ENCODE measurements at regions of chr1 and their contacts with region 1.

Region 1: DNA sequence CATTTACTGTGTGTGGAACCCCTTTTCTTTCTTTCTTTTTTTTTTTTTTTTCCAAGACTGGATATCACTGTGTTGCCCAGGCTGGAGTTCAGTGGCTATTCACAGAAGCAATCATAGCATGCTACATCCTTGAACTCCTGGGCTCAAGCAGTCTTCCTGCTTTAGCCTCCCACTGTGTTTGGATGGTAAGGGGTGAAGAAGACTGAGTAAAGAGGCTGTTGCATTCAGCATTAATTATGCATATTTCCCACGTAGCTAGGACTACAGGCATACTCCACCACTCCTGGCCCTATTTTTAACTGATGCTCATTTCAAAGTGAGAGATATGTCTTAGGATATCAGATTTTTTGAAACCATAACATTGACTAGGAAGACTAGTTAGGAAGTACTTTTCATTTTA is 39.5 kb downstream of the PHACTR4 start:
- DNase-seq: no peak
- H3K4me3 ChIP-seq: no peak overlapping the region
- CTCF ChIP-seq: no peak

Region 2: DNA sequence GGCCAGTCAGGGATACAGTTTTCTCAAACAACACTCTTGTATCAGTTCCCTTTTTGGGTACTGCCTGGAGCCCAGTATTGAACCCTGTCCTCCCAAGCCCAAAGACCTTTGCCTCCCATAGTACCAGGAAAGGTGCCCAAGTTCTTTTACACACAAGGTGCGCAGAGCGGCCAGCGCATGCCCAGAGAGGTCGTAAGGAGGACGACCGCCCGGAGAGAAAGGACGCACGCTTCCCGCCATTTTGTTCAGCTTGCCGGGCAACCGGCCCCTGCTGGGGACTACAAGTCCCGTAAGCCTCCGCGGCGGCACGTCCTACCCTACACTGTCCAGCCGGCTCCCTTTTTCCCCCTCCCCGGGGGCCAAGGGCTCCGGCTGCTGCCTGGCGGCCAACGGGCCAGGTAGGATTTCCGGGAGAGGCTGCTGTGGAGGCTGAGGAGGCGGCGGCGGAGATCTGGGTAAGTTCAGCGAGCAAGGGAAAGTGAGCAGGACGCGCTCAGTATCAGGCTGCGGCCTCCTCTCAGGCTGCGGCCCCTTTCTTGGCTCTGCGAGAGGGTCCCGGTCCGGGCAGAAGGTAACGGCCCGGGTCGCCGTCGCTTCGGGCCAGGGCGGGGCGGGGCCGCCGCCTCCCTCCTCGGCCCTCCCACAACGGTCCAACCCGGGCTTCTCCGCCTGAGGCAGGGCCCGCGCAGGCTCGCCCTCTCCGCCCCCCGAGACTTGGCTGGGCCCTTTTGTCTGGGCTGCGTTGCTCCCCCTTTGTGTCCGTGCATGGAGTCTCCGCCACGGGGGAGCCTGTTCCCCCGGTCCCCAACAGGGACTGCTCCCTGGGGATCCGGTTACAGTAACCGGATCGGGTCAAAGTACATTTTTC is 39.5 kb before region 1 on chr1 and contains the start of gene PHACTR4:
- CTCF ChIA-PET with region 1: no interaction called
- POLR2A ChIA-PET with region 1: no interaction called
- DNase-seq: no peak
- H3K4me3 ChIP-seq: peak within 1 kb of the TSS; percentile 88
- CTCF ChIP-seq: no peak

Region 3: DNA sequence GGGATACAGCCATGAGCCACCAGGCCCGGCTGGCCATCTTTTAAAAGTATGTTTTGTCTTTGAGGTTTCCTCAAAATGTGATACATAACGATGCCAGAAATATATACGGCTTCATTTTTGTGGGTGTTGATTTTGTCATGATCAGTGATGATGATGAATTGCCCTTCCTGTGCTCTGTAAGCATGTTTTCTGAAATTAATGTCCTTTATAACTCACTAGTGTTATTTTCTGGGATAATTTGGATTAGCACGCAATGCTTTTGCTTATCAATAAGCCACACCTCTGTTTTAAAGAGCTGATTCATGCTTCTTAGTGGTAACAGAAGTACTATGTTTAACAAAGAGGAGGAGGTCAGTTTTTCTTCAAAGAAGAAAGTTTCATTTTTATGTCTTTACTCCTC is 13.9 kb before region 1 on chr1:
- CTCF ChIA-PET with region 1: interaction called, 12 read pairs
- POLR2A ChIA-PET with region 1: no interaction called
- DNase-seq: no peak
- H3K4me3 ChIP-seq: no peak overlapping the region
- CTCF ChIP-seq: no peak

Region 4: GRCh38 chr1:28428012-28428411 is 18.9 kb after region 1 on chr1:
- CTCF ChIA-PET with region 1: interaction called, 15 read pairs
- POLR2A ChIA-PET with region 1: no interaction called
- DNase-seq: no peak
- H3K4me3 ChIP-seq: no peak overlapping the region
- CTCF ChIP-seq: no peak

Region 5: DNA sequence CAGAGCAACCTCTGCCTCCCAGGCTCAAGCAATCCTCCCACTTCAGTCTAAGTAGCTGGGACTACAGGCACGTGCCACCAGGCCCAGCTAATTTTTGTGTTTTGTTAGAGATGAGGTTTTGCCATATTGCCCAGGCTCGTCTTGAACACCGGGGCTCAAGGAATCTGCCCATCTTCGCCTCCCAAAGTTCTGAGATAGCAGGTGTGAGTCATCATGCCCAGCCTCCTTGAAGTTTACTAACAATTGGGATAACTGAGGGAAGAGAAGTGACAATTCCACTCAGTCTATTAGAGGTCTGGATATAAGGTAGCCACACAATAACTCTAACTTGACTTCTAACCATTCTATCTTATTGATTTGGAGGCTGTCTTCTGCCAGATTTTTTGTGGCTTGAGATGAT is 90.5 kb after region 1 on chr1:
- CTCF ChIA-PET with region 1: no interaction called
- POLR2A ChIA-PET with region 1: no interaction called
- DNase-seq: no peak
- H3K4me3 ChIP-seq: no peak overlapping the region
- CTCF ChIP-seq: no peak

Measured in AG04449 (cell line).